ENCODE measurements at regions of chr3 and their contacts with region 1.

Region 1: DNA sequence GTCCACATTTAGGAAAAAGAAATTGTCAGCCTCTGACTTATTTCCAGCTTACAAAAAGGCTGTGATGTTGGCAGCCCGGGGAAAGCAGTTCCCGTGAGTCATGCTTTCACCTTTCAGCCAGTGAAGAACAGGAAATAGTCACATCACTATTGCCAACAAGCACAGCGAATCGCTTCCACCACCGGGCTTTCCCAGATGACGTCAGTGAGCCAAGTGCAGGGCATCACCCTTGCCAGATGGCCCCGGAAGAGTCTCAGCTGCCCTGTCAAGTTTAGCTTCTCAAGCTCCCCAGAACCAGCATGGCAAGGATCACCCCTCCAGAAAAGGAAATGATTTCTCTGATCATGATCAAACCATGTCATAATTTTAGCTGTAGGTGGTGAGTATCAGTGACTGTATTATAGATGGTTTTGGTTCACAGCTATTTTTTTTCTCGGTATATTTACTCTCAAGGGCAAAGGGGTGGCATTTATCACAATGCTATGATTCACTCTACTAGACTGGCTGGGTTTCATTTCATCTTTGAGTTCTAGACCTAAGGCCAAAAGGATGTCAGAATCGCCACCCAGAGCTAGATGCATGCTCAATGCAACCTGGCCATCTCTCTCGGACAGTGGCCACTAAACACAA is 32.9 kb downstream of the B3GNT5 start:
- DNase-seq: peak; percentile 97
- ATAC-seq: peak; percentile 97
- H3K4me3 ChIP-seq: peak overlapping the region; percentile 0 to 41; a peak in 3 of 4 replicates
- H3K27ac ChIP-seq: peak overlapping the region; percentile 78
- H3K4me1 ChIP-seq: peaks cover 29% of the 10 kb centered on the region
- H3K27me3 ChIP-seq: no peaks in the 10 kb centered on the region
- CTCF ChIP-seq: no peak

Region 2: GRCh38 chr3:183252973-183253901 is 32.7 kb before region 1 on chr3 and contains the start of gene B3GNT5:
- CTCF ChIA-PET with region 1: no interaction called
- POLR2A ChIA-PET with region 1: interaction called, 12 read pairs
- in situ Hi-C with region 1: no loop called
- intact Hi-C with region 1: no loop called
- DNase-seq: no peak
- ATAC-seq: peak; percentile 68
- H3K4me3 ChIP-seq: peak within 1 kb of the TSS; percentile 83 to 95
- H3K27ac ChIP-seq: peak within 1 kb of the TSS; percentile 82
- H3K4me1 ChIP-seq: peaks cover 16% of the 10 kb centered on the region
- H3K27me3 ChIP-seq: no peaks in the 10 kb centered on the region
- CTCF ChIP-seq: no peak
- total RNA-seq, gene B3GNT5: 22.8 TPM

Region 3: GRCh38 chr3:183800243-183800863 is 514.4 kb after region 1 on chr3:
- CTCF ChIA-PET with region 1: no interaction called
- POLR2A ChIA-PET with region 1: interaction called, 10 read pairs
- in situ Hi-C with region 1: no loop called
- intact Hi-C with region 1: no loop called
- DNase-seq: no peak
- ATAC-seq: no peak
- H3K4me3 ChIP-seq: no peak overlapping the region
- H3K27ac ChIP-seq: no peak overlapping the region
- H3K4me1 ChIP-seq: no peaks in the 10 kb centered on the region
- H3K27me3 ChIP-seq: no peaks in the 10 kb centered on the region
- CTCF ChIP-seq: no peak